AG04450 (cell line): ENCODE measurements at regions of chr7 and their contacts with region 1.

Region 1: GRCh38 chr7:32846701-32847100 is 44.9 kb downstream of the KBTBD2 start:
- DNase-seq: peak; percentile 56
- H3K4me3 ChIP-seq: no peak overlapping the region
- H3K27ac ChIP-seq: no peak overlapping the region
- H3K27me3 ChIP-seq: no peaks in the 10 kb centered on the region
- CTCF ChIP-seq: peak; percentile 87

Region 2: GRCh38 chr7:32858648-32859047 is 11.9 kb after region 1 on chr7:
- CTCF ChIA-PET with region 1: interaction called, 53 read pairs
- POLR2A ChIA-PET with region 1: no interaction called
- DNase-seq: no peak
- H3K4me3 ChIP-seq: no peak overlapping the region
- H3K27ac ChIP-seq: no peak overlapping the region
- H3K27me3 ChIP-seq: no peaks in the 10 kb centered on the region
- CTCF ChIP-seq: no peak

Region 3: DNA sequence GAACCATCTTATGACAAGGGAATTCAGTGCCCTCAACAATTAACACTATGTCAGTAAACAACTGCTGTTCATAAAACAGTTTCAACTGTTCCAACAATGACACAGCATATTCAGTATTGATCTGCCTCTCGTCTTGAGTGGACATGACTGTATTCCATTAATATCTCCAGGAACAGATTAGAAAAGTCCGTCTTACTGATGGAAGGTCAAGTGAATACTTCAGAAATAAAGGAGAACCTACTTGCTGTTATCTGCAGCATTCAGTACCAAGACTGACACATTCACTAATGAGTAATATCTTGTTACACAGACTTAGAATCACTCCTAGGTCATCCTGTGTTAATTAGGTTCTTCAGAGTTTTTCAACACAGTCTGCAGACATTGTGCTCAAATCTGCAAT is 32.8 kb after region 1 on chr7:
- CTCF ChIA-PET with region 1: interaction called, 25 read pairs
- POLR2A ChIA-PET with region 1: no interaction called
- DNase-seq: no peak
- H3K4me3 ChIP-seq: no peak overlapping the region
- H3K27ac ChIP-seq: no peak overlapping the region
- H3K27me3 ChIP-seq: no peaks in the 10 kb centered on the region
- CTCF ChIP-seq: no peak

Region 4: DNA sequence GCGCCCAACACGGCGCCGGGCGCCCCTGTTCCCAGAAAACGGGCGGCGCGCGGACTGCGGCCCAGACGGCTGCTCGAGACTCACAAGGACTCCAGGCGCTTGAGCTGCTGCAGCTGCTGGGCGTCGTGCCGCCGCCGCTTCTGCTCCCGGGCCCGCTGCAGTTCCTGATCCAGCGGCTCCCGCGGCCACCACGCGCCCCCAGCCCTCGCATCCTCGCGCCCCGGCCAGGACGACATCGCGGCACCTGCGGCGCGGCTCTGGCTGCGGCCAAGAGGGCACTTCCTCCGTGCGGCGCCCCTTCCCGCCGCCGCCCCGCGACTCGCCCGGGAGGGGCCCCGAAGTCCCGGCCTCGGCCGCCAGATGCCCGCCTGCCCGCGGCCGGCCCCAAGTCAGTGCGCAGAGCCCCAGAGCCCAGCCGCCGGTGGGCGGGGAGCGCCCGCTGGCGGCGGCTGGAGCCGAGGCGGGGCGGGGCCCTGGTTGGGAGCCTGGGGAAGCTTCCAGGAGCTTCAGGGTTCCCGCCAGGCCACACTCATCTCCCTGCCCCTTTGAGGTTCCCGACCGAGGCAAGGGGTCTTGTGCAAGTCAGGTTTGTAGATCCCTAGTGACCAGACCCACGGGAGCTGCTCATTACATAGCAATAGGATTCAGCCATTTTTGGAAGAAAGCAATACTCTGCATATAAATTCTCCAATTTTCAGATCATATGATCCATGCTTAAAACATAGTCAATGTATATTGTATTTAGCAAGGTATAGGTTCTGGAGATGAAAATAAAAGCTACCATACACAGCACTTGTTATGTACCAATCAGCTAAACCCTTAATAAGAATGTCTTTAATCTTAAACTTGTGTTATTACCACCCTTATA is 96.3 kb after region 1 on chr7:
- CTCF ChIA-PET with region 1: interaction called, 25 read pairs
- POLR2A ChIA-PET with region 1: no interaction called
- DNase-seq: no peak
- H3K4me3 ChIP-seq: peak overlapping the region; percentile 81
- H3K27ac ChIP-seq: peak overlapping the region; percentile 61
- H3K27me3 ChIP-seq: no peaks in the 10 kb centered on the region
- CTCF ChIP-seq: peak; percentile 47

Region 5: DNA sequence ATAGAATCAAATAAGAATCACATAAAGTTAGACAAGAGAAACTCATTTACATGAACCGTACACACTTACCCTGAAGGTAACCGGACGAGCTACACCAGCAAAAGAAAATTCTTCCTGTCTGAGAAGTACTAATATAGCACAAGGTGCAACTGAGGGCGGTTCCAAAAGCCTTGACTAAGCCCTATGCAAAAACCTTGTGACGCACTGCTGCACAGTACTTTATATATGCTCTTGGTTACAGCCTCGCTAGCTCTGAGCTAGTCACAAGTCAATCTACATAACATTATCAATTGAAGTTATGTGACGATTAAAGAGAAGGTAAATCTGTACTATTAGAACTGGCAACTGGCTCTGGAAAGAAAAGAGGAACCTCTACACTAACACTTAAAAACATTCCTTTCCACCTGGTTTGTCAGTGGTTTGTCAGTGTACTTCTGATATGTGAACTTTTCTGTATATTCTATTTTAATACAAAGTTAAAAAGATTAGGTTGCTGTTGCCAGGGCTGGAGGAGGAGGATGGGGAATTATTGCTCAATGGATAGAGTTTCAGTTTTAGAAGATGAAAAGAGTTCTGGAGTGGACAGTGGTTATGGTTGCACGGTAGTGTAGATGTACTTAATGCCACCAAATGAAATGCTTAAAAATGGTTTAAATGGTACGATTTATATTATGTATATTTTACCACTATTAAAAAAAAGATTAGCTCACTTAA is 194.3 kb after region 1 on chr7:
- CTCF ChIA-PET with region 1: interaction called, 10 read pairs
- POLR2A ChIA-PET with region 1: no interaction called
- DNase-seq: no peak
- H3K4me3 ChIP-seq: no peak overlapping the region
- H3K27ac ChIP-seq: no peak overlapping the region
- H3K27me3 ChIP-seq: no peaks in the 10 kb centered on the region
- CTCF ChIP-seq: no peak

Region 6: DNA sequence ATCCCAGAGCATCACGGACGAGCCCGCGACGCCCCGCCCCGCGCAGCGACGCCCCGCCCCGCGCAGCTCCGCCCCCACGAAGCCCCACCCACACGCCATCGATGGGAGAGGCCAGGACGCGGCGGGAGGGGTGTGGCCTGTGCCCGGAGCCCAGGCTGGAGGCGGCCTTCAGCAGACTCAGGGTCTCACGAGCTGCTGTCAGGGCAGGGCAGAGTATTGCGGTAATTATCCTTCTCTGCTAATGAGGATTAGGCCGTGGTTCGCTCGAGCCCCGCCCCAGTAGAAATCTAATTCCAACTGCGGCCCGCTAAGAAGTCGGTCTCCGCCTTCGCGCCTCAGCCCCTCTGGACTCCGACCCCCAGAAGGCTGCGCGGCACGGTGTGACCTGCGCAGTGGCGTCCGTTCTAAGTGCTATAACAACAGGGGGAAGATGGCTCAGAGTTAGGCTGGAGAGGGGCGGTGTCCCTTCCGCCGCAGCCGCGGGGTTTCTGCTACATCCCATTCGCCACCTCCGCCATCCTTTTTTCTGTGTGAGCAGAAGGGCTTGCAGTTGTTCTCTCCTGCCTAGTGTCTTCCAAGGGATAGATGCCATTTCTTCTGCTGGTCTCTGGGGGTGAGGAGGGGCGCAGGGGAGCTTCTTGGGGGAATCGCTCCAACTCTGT is 216.2 kb after region 1 on chr7:
- CTCF ChIA-PET with region 1: interaction called, 10 read pairs
- POLR2A ChIA-PET with region 1: no interaction called
- DNase-seq: peak; percentile 79
- H3K4me3 ChIP-seq: peak overlapping the region; percentile 86
- H3K27ac ChIP-seq: peak overlapping the region; percentile 90
- H3K27me3 ChIP-seq: no peaks in the 10 kb centered on the region
- CTCF ChIP-seq: no peak

Region 7: GRCh38 chr7:33109005-33109757 is 262.5 kb after region 1 on chr7 and contains the start of gene RP9:
- CTCF ChIA-PET with region 1: interaction called, 104 read pairs
- POLR2A ChIA-PET with region 1: no interaction called
- DNase-seq: no peak
- H3K4me3 ChIP-seq: peak within 1 kb of the TSS; percentile 80
- H3K27ac ChIP-seq: peak within 1 kb of the TSS; percentile 39
- H3K27me3 ChIP-seq: peaks cover 2% of the 10 kb centered on the region
- CTCF ChIP-seq: peak; percentile 25; the same call in 1 of the 2 replicates
- polyA plus RNA-seq, gene RP9: 18.2 and 23.9 TPM in 2 replicates